ENCODE measurements at regions of chr1 and their contacts with region 1.

Region 1: DNA sequence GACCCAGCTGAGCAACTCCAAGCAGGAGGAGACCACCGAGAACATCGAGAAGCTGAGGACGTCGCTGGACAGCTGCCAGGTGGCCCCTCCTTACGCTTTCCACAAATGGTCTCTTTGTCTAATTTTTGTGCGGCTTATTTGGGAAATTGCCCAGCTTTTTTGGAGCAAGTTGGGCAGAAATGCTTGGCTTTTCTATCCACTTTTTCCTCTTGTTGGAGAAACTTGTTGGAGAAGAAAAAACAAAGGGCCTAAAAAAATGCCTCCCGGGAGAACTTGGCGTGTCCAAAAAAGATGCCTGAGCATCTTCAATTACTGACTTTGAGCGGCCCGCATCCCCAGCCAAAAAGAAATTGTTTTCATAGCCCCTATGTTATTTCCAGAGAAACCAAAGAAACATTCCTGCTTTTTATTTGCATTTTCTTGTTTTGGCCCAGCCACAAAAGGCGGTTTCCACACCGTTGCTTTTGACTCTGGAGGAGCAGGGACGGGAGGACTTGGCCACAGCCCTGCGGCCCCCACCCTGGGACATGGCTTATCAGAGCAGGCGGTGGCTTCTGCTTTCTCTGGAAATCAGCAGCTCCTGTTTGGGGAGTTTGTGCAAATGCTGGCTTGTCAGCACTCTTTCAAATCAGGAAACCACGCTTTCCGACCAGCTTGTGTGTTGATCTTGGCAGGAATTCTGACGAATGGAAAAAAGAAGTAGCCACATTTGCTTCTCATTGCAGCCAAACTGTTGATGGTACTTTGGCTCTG is 81.2 kb upstream of the EFHD2 start:
- DNase-seq: no peak
- H3K4me3 Mint-ChIP-seq: no peak overlapping the region
- H3K27ac Mint-ChIP-seq: no peak overlapping the region
- H3K4me1 Mint-ChIP-seq: peaks cover 14% of the 10 kb centered on the region
- H3K27me3 Mint-ChIP-seq: peaks cover 26% of the 10 kb centered on the region

Region 2: DNA sequence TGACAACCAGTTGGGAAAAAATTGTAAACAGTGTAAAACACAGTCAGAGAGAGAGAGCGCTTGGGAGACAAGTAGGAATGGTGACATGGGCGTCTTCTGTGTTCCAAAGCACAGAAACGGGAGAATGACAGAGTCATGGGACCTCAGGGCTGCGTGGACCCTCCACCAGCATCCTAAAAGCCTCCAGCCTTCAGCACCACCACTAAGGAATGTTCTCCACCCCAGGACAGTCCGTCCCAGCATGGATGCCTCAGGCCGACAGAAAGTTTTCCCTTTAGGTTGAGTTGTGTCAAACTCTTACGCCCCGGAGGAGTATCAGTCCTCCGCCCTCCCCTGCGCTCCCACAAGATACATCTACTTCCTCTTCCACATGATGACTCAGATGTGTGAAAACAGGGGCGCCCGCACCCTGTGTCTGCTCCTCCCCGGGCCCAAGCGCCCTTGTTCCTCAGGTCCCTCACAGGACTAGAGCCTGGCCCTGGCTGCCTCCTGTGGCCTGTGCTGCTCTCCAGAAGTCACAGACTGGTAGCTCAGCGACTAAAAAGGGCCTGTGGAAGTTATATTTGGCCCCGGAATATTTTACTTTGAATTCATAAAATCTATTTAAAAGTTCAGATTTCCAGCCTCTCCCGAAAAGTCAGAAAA is 17.3 kb after region 1 on chr1:
- intact Hi-C with region 1: loop called (anchors 2 kb)
- DNase-seq: peak; percentile 65
- H3K4me3 Mint-ChIP-seq: peak overlapping the region; percentile 28
- H3K27ac Mint-ChIP-seq: peak overlapping the region; percentile 74
- H3K4me1 Mint-ChIP-seq: peaks cover 75% of the 10 kb centered on the region
- H3K27me3 Mint-ChIP-seq: peaks cover 2% of the 10 kb centered on the region

Region 3: GRCh38 chr1:15364740-15365139 is 36.2 kb after region 1 on chr1:
- intact Hi-C with region 1: loop called (anchors 5 kb)
- DNase-seq: no peak
- H3K4me3 Mint-ChIP-seq: no peak overlapping the region
- H3K27ac Mint-ChIP-seq: no peak overlapping the region
- H3K4me1 Mint-ChIP-seq: no peaks in the 10 kb centered on the region
- H3K27me3 Mint-ChIP-seq: peaks cover 8% of the 10 kb centered on the region

Region 4: GRCh38 chr1:15417365-15417934 is 88.9 kb after region 1 on chr1:
- intact Hi-C with region 1: loop called (anchors 5 kb)
- DNase-seq: peak; percentile 64
- H3K4me3 Mint-ChIP-seq: peak overlapping the region; percentile 66
- H3K27ac Mint-ChIP-seq: peak overlapping the region; percentile 78
- H3K4me1 Mint-ChIP-seq: peaks cover 54% of the 10 kb centered on the region
- H3K27me3 Mint-ChIP-seq: no peaks in the 10 kb centered on the region

Region 5: DNA sequence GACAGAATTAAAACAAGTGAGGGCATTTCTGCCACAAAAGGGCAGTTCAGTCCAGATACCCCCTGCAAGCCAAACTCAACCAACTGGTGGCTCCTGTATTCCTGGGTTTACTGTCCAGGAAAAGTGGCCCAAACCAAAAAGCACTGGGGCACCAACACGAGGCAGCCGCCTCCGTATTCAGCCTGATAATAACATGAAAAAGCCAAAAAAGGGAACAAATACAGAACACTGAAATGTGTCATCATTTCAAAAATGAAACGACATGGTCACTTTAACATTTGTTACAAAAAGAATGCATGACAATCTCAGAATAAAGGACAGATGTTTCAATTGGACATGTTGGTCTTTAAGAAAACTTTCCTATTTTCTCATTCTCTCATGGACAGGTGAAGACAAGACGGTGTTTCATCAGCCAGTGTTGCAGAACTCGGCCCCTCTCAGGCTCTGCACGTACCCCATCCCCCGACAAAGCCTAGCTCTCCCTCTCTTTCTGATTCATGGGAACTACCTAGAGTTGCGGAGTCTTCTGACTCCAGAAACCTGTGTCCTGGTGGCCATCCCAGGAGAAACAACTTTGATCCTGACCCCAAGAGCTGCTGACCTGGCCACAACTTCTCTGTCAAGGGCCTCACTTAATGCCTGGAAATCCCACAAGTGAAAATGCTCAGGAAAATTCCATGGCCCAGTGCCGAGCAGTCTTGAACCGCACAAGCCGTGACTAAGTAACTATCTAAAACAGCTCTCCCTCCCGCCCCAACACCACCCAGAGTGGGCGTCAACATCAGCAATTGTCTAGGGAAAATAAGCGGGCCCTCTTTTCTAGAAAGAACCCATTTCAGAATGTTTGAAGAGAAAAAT is 620.3 kb after region 1 on chr1:
- intact Hi-C with region 1: no loop called
- DNase-seq: no peak
- H3K4me3 Mint-ChIP-seq: peak overlapping the region; percentile 54
- H3K27ac Mint-ChIP-seq: peak overlapping the region; percentile 98
- H3K4me1 Mint-ChIP-seq: peaks cover 60% of the 10 kb centered on the region
- H3K27me3 Mint-ChIP-seq: no peaks in the 10 kb centered on the region